ENCODE measurements at regions of chr22 and their contacts with region 1.

Region 1: GRCh38 chr22:46934746-46935491 is 172.5 kb downstream of the TBC1D22A start:
- DNase-seq: no peak
- ATAC-seq: peak in 3 of 4 donors; percentile 9 to 64 (median 13)
- H3K4me3 ChIP-seq: peak overlapping the region in 2 of 3 donors; percentile 25 to 35
- H3K27ac ChIP-seq: peak overlapping the region; percentile 75 to 98 (median 84)
- H3K4me1 ChIP-seq: peaks cover 0 to 35% (median 10%) of the 10 kb centered on the region in 4 donors
- H3K27me3 ChIP-seq: no peaks in the 10 kb centered on the region
- CTCF ChIP-seq: no peak
- POLR2A ChIP-seq: no peak

Region 2: GRCh38 chr22:46815896-46816731 is 118.8 kb before region 1 on chr22:
- intact Hi-C with region 1: loop called in 1 of 2 experiments (anchors 10 kb)
- DNase-seq: peak; percentile 70 to 92 (median 84)
- ATAC-seq: peak; percentile 69 to 84 (median 80)
- H3K4me3 ChIP-seq: peak overlapping the region in 2 of 3 donors; percentile 14 to 15
- H3K27ac ChIP-seq: peak overlapping the region; percentile 75 to 91 (median 91)
- H3K4me1 ChIP-seq: peaks cover 0 to 32% (median 14%) of the 10 kb centered on the region in 4 donors
- H3K27me3 ChIP-seq: no peaks in the 10 kb centered on the region
- CTCF ChIP-seq: peak in 1 of 4 donors; percentile 7
- POLR2A ChIP-seq: peak; percentile 24

Region 3: DNA sequence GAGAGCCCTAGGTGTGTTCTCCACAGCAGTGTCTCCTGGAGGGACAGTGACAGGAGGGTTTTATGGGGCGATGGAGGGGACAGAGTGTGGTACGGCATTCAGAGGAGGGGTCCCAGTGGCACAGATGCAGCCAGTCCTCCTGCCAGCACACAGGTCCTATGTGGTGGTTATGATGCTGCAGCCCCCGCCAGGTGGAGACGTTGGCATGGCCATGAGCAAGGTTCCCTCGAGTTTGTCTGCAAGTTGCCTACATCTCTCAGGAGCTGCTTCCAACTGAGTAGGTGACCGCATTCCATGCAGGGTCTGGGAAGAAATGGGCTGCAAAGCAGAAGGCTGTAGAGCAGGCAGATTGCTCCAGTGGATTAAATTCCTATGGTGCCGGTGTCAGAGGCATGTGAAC is 473.5 kb after region 1 on chr22:
- intact Hi-C with region 1: no loop called
- DNase-seq: no peak
- ATAC-seq: no peak
- H3K4me3 ChIP-seq: no peak overlapping the region
- H3K27ac ChIP-seq: no peak overlapping the region
- H3K4me1 ChIP-seq: no peaks in the 10 kb centered on the region
- H3K27me3 ChIP-seq: no peaks in the 10 kb centered on the region
- CTCF ChIP-seq: no peak
- POLR2A ChIP-seq: no peak

Measured in right lobe of liver (tissue), 6 donors.